Heart left ventricle (tissue), 16 donors: ENCODE measurements at regions of chr9 and their contacts with region 1.

Region 1: DNA sequence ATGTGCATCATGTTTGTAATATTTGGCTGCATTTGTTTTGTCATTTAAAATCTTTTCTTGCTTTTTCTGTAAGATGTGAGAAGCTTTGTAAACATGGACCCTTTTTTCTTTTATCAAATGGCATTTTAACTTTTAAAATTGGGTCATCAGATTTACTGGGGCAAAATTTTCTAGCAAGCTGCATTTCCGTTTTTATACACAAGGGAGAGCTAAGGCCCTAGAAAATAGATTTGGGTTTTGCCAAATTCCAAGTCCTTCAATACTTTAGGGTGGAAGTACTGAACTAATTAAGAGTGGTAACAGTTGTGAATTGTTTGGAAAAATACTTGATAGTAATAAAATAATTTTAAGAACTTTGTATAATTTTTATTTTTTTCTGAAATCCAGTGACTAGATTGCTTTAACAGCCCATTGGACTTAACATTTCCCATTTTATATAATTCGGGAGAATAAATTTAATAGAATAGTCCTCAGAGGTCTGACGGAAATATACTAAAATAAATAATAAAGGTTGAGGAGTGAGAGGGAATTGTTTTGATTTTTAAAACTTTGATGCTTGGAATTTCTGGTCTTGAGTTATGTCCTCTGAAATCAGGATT is 117.4 kb downstream of the SMARCA2 start:
- DNase-seq: no peak
- ATAC-seq: peak in 1 of 4 donors; percentile 51
- H3K4me3 ChIP-seq: no peak overlapping the region
- H3K27ac ChIP-seq: no peak overlapping the region
- H3K4me1 ChIP-seq: peaks cover 0 to 64% (median 34%) of the 10 kb centered on the region in 12 donors
- H3K27me3 ChIP-seq: no peaks in the 10 kb centered on the region
- CTCF ChIP-seq: peak; percentile 50 to 85 (median 78)
- POLR2A ChIP-seq: no peak

Region 2: DNA sequence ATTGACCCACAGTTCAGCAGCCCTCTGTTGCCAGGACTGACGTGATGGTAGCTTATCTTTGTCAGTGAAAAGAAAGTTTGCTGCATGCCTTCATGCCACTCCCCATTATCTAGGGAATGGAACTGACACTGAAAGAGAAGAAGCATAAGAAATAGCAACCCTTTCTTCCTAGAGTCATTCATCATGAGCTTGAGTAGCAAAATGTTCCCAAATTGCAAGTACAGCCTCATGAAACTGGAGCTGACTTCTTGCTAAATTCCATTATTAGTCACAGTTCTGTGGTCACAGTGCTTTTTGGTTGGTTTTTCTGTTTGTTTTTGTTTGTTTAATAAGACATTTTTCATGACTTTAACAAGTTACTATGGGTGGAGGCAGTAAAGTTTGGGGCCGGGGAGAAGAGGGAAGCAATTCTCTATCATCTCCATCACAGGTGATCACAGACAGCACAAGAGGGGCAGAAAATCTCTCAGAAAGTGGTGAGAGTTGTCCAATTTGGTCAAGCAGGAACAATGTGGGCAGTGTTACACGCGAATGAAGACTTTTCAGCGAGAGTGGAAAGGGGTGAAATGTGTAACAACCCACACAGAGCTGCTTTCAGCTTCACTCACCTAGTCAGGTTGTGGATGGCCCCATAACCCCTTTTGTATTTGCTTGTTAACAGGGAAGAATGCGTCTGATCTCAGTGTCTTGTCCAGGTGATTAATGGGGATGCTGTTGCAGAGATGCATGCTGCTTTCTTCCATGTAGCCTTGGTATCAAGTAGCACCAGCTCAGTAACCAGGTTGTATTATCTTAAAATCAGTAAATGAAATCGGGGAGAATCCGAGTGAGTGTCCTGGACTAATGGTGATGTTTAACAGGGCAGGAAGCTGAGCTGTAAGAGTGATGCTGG is 642.0 kb before region 1 on chr9:
- intact Hi-C with region 1: no loop called
- DNase-seq: no peak
- ATAC-seq: no peak
- H3K4me3 ChIP-seq: no peak overlapping the region
- H3K27ac ChIP-seq: no peak overlapping the region
- H3K4me1 ChIP-seq: no peaks in the 10 kb centered on the region
- H3K27me3 ChIP-seq: no peaks in the 10 kb centered on the region
- CTCF ChIP-seq: no peak
- POLR2A ChIP-seq: no peak

Region 3: GRCh38 chr9:2234371-2234893 is 101.8 kb after region 1 on chr9:
- intact Hi-C with region 1: loop called in 1 of 10 experiments (anchors 10 kb)
- DNase-seq: peak in 2 of 5 donors; percentile 29 to 54
- ATAC-seq: peak; percentile 73 to 86 (median 79)
- H3K4me3 ChIP-seq: no peak overlapping the region
- H3K27ac ChIP-seq: peak overlapping the region in 4 of 12 donors; percentile 23 to 45 (median 26)
- H3K4me1 ChIP-seq: peaks cover 0 to 30% (median 5%) of the 10 kb centered on the region in 12 donors
- H3K27me3 ChIP-seq: no peaks in the 10 kb centered on the region
- CTCF ChIP-seq: no peak
- POLR2A ChIP-seq: no peak

Region 4: GRCh38 chr9:2494562-2494961 is 362.0 kb after region 1 on chr9:
- intact Hi-C with region 1: loop called in 1 of 10 experiments (anchors 10 kb)
- DNase-seq: no peak
- ATAC-seq: peak in 2 of 4 donors; percentile 40 to 50
- H3K4me3 ChIP-seq: no peak overlapping the region
- H3K27ac ChIP-seq: peak overlapping the region in 9 of 12 donors; percentile 14 to 78 (median 67)
- H3K4me1 ChIP-seq: peaks cover 3 to 64% (median 23%) of the 10 kb centered on the region in 12 donors
- H3K27me3 ChIP-seq: no peaks in the 10 kb centered on the region
- CTCF ChIP-seq: no peak
- POLR2A ChIP-seq: no peak

Region 5: GRCh38 chr9:2739063-2739462 is 606.5 kb after region 1 on chr9:
- intact Hi-C with region 1: loop called in 1 of 10 experiments (anchors 10 kb)
- DNase-seq: no peak
- ATAC-seq: no peak
- H3K4me3 ChIP-seq: no peak overlapping the region
- H3K27ac ChIP-seq: no peak overlapping the region
- H3K4me1 ChIP-seq: peaks cover 0 to 7% (median 0%) of the 10 kb centered on the region in 12 donors
- H3K27me3 ChIP-seq: no peaks in the 10 kb centered on the region
- CTCF ChIP-seq: no peak
- POLR2A ChIP-seq: no peak

Region 6: GRCh38 chr9:2816476-2817141 is 684.0 kb after region 1 on chr9:
- intact Hi-C with region 1: loop called in 1 of 10 experiments (anchors 5 kb)
- DNase-seq: peak in 4 of 5 donors; percentile 32 to 44 (median 34)
- ATAC-seq: peak; percentile 73 to 84 (median 80)
- H3K4me3 ChIP-seq: no peak overlapping the region
- H3K27ac ChIP-seq: peak overlapping the region; percentile 28 to 86 (median 76)
- H3K4me1 ChIP-seq: peaks cover 0 to 36% (median 16%) of the 10 kb centered on the region in 12 donors
- H3K27me3 ChIP-seq: no peaks in the 10 kb centered on the region
- CTCF ChIP-seq: no peak
- POLR2A ChIP-seq: no peak